ENCODE measurements at regions of chr10 and their contacts with region 1.

Region 1: DNA sequence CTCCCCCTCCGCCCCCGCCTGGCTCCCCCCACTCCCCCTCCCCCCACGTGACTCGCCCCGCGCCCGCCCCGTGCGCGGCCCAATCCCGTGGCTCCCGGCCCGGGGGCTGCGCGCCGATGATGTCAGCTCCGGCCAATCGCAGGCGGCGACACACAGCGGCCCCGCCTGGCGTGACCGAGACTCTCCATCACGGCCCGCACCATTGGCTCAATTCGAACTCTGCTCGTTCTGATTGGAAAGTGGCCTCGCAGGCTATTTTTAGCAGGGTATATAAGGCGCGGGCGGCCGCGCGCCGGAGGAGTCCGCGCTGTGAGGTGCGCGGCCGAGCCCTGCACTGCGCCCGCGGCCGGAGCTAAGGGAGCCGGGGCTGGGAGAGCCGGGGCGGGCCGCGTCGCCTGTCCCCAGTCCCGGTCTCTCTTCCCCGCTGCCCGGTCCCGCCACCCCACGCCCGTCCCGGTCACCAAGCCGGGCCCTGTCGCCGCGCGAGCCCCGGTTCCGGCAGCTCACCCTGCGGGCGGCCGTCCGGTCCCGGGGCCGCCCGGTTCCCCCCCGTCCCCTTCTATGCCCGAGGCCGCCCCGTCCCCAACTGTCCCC is 345 bp upstream of the KLF6 start:
- DNase-seq: peak in 1 of 2 donors; percentile 99
- H3K4me3 ChIP-seq: peak overlapping the region; percentile 76 to 87
- H3K27ac ChIP-seq: peak overlapping the region; percentile 100
- H3K4me1 ChIP-seq: peaks cover 22% of the 10 kb centered on the region
- H3K27me3 ChIP-seq: no peaks in the 10 kb centered on the region
- CTCF ChIP-seq: peak in 1 of 3 experiments; percentile 7
- POLR2A ChIP-seq: peak; percentile 53 to 100

Region 2: DNA sequence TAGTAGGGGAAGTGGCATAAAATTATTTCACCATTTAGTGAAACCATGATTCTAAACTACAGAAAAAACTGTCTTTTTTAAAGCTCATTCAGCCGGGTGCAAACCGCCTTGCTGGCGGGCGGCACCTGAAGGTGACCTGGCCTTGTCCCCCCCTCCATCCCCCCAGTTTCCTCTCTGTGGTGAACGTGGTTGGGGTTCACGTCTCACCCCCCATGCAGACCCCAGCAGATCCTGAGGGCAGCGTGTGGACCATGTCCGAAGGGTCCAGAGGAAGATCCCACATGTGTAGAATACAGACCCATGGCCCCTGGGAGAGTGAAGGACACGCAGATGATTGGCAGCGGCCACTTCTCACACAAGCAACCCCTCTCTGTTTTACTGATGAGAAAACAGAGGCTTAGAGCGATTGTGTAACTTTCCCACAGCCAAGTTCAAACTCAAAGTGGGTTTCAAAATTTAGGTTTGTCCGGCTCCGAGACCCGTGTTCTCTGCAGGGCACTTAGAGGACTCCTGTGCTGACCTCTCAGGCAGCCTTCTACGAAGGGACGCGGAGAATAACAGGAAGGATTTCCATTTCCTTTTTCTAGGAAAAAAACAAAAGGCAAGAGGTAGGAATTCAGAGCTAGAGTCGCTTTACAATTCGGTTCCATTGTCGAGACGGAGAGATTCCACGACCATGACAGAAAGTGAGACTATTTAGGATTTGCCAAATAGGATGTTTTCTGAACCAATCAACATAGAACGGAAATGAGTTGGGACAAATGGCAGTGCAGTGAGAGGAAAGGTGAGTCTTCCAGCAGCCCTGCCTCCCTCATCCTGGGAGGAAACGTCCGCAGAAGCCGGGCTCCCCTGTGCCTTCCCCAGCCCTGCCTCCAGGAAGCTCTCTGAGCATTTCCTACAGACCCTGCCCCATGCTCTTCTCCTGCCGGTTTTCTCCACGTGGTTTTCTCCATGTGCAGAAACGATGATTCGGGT is 545.1 kb before region 1 on chr10:
- intact Hi-C with region 1: loop called (anchors 5 kb)
- DNase-seq: no peak
- H3K4me3 ChIP-seq: no peak overlapping the region
- H3K27ac ChIP-seq: peak overlapping the region; percentile 40
- H3K4me1 ChIP-seq: no peaks in the 10 kb centered on the region
- H3K27me3 ChIP-seq: no peaks in the 10 kb centered on the region
- CTCF ChIP-seq: no peak
- POLR2A ChIP-seq: no peak

Region 3: GRCh38 chr10:3467052-3467951 is 318.1 kb before region 1 on chr10:
- intact Hi-C with region 1: loop called (anchors 5 kb)
- DNase-seq: peak in 1 of 2 donors; percentile 96
- H3K4me3 ChIP-seq: peak overlapping the region; percentile 12 to 27
- H3K27ac ChIP-seq: peak overlapping the region; percentile 96
- H3K4me1 ChIP-seq: peaks cover 69% of the 10 kb centered on the region
- H3K27me3 ChIP-seq: no peaks in the 10 kb centered on the region
- CTCF ChIP-seq: peak in 2 of 3 experiments; percentile 36 to 54
- POLR2A ChIP-seq: no peak

Region 4: DNA sequence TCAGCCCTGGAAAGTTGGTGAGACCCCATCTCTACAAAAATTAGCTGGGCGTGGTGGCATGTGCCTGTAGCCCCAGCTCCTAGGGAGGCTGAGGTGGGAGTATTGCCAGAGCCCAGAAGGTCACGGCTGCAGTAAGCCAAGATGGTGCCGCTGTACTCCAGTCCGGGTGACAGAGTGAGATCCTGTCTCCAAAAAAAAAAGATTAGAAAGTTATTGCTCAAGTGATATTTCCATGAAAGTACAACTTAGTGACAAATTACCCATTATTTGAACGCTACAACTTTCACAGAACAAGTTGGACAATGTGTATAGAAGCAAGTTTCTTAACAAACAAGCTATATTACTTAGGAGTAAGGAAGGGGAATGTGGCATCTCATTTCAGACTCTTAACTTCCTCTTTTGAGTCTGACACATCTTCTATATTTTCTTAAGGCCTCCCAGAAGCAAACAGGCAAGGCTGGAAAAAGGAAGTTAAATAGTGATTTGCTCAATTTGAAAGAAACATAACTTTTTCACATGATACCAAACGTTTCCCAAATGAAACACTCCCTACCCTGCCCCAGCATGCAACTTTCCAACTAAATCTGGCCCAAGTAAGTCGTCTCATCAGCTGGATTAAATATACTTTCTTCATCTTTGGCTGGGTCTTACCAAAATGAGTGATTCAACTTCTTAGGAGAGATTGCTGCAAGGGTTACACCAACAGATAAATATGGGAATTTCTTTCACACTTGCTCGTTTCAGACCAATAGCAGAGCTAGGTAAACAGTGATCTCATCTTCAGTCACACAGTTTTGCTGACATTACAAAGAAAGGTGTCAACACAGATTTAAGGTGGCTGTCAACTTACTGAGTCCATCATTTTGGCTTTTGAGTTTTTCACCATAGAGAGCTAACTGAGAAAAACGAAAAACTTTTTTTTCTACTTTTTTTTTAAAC is 65.9 kb after region 1 on chr10:
- intact Hi-C with region 1: loop called (anchors 2 kb)
- DNase-seq: no peak
- H3K4me3 ChIP-seq: no peak overlapping the region
- H3K27ac ChIP-seq: peak overlapping the region; percentile 93
- H3K4me1 ChIP-seq: peaks cover 43% of the 10 kb centered on the region
- H3K27me3 ChIP-seq: no peaks in the 10 kb centered on the region
- CTCF ChIP-seq: no peak
- POLR2A ChIP-seq: no peak

Region 5: DNA sequence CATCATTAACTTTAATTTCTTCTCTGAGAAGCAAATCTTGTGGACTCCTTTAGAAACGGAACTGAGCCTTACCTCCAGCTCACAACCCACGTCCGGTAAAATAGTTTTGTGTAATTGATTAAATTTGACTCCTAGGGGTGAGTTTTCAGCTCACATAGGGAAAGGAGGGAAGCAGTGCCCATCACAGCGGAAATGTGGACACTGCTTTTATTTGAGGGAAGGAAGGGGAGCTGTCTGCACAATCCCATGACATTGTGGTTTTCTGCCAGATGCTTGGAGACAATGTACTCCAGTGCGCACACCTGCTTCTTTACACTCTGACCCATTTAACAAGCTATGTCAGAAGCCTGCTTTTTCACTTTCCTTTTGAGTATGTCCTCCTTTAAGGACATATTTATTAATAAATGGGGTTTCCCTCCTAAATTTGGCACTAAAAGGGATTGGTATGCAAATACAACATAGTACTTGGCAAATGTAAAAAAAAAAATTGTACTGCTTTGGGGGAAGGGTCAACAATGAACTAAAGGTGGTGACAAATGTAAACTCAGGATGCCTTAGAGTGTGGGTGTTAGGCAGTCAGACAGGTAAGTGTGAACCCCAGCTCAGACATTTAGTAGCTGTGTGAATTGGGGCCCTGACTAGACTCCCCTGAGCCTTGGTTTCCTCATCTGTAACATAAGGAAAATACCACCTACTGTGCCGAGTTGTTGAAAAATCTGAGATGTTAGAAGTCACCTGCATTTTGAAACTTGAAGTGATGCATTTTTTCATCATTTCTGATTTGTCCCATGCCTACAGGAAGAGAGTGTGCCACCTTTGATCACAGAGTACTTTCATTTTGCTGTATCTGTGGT is 89.9 kb after region 1 on chr10:
- intact Hi-C with region 1: loop called (anchors 1 kb)
- DNase-seq: no peak
- H3K4me3 ChIP-seq: no peak overlapping the region
- H3K27ac ChIP-seq: no peak overlapping the region
- H3K4me1 ChIP-seq: peaks cover 16% of the 10 kb centered on the region
- H3K27me3 ChIP-seq: no peaks in the 10 kb centered on the region
- CTCF ChIP-seq: no peak
- POLR2A ChIP-seq: no peak

Region 6: DNA sequence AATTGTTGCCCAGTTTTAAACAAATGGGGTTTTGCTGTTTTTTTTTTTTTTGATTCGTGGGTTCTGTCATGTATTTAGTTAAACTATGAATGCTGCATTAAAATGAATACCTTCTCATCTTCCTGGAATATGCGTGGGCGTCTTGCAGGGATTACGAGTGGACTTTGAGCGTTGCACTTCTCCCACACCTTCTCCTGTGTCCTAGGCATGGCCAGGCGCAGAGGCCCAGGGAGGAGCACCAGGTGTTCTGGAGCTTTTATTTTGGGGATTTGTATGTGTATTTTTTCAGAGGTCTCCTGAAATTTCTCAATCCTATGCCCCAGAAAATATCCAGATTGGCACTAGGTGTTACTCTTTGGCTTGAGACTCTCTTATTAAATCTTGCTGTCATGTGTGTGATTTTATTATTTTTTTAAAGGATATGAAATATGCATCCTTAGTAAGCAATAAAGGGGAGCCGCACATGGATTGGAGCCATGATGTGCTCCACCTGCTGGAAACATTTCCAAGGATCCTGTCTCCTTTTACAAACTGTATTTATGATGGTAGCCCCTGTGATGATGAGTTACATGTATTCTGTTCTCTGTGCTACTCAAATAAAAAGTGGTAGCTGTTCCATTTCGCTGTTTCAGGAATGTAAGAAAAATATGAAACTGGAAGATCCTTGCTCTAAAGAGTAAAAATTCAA is 481.9 kb after region 1 on chr10:
- intact Hi-C with region 1: loop called (anchors 10 kb)
- DNase-seq: no peak
- H3K4me3 ChIP-seq: no peak overlapping the region
- H3K27ac ChIP-seq: peak overlapping the region; percentile 13
- H3K4me1 ChIP-seq: peaks cover 48% of the 10 kb centered on the region
- H3K27me3 ChIP-seq: no peaks in the 10 kb centered on the region
- CTCF ChIP-seq: no peak
- POLR2A ChIP-seq: no peak

Region 7: DNA sequence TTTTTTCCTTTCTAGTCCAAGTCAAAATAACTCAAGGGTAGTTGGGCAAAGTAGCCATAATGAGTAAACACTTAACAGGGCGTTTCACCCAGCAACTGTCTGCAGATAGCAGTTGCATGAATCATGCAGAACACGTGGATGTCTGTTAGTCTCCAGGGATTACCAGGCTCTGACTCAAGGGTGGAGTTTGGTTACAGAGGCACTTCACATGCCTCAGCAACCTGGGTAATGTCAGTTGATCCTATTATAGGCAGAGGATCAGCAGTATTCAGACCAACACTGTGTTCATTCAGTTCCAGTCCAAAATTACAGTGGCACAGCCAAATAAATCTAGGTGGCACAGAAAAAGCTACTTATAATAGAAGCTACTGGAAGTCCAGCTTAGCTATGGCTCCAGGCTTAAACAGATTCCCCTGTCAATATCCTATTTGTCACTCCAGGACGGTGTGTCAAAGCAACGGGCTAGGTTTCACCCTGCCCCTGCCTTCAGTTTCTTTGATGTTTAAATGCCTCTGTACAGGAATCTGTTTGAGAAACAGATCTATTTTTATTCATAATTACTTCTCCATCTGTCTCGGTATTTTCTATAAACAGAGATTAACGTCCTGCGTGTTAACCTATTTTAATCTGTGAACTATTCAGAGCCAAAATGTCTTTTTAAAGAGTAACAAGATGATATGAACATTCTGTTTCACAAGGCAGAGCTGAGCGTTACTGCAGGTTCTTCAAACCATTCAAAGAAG is 878.0 kb after region 1 on chr10:
- intact Hi-C with region 1: loop called (anchors 10 kb)
- DNase-seq: peak in 1 of 2 donors; percentile 98
- H3K4me3 ChIP-seq: no peak overlapping the region
- H3K27ac ChIP-seq: peak overlapping the region; percentile 92
- H3K4me1 ChIP-seq: peaks cover 44% of the 10 kb centered on the region
- H3K27me3 ChIP-seq: no peaks in the 10 kb centered on the region
- CTCF ChIP-seq: no peak
- POLR2A ChIP-seq: no peak

Measured in vagina (tissue), 2 donors.